A673 (cell line): ENCODE measurements at regions of chr11 and their contacts with region 1.

Region 1: DNA sequence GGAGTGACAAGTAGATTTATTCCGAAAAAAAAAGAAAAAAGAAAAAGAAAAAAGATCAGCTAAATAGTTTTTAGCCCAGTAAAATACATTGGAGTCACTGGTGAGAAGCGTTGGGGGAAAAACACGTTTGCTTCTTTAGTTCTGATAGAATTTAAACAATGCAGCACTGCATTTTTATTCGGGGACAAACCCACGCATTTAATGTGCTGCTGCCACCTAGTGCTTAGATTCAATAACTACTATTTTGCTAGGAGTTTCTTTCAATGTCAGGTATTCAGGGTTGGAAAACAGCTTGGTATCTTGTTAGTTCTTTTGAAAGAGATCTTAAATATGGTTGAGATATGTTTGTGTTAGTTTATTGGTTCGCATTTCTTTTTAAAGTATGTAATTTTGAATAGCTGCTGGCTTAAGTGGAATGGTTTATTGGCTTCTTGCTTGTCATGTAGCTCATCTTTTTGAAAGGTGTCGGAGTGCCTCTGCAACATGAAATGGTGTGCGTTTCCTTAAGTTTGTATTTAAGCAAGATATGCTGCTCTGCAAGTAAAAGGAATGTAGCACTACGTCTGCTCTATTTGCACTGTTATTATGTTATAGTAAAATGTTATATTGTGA is 41.9 kb downstream of the SVIP start:
- DNase-seq: peak; percentile 66
- H3K4me3 ChIP-seq: no peak overlapping the region
- H3K27ac ChIP-seq: no peak overlapping the region
- H3K4me1 ChIP-seq: peaks cover 16% of the 10 kb centered on the region
- H3K27me3 ChIP-seq: no peaks in the 10 kb centered on the region
- CTCF ChIP-seq: peak; percentile 69

Region 2: DNA sequence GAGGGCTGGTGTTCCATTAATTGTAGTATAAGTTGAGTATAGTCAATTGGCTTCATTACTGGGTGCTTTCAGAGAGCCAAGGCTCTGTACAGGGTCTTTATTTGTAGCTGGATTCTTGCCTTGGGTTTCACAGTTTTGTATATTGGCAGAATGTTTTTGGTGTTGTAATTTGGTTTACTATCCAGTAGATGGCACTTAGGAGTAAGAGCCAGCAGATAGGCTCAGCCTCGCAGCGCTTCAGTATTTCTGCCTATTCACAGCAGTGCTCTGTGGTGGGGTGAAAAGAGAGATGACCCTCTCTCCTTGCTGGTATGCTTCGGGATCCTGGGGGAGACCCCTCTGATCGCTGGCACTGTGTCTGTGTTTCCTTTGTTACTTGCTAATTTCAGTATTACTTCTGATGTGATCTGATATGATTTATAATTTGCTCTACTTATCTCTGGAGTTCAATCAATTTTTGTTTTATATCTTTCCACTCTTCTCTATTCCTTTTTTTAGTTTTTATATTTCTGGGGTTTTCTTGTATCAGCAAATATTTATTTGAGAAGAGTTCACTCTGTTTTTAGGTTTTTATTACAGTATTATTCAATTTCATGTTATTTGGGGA is 542.6 kb before region 1 on chr11:
- CTCF ChIA-PET with region 1: no interaction called
- POLR2A ChIA-PET with region 1: no interaction called
- intact Hi-C with region 1: loop called (anchors 5 kb)
- DNase-seq: peak; percentile 53
- H3K4me3 ChIP-seq: no peak overlapping the region
- H3K27ac ChIP-seq: no peak overlapping the region
- H3K4me1 ChIP-seq: no peaks in the 10 kb centered on the region
- H3K27me3 ChIP-seq: no peaks in the 10 kb centered on the region
- CTCF ChIP-seq: peak; percentile 68

Region 3: GRCh38 chr11:22337596-22338485 is 449.8 kb before region 1 on chr11 and contains the start of gene SLC17A6:
- CTCF ChIA-PET with region 1: interaction called, 4 read pairs
- POLR2A ChIA-PET with region 1: no interaction called
- intact Hi-C with region 1: loop called (anchors 2 kb)
- DNase-seq: peak; percentile 67
- H3K4me3 ChIP-seq: no peak within 1 kb of the TSS
- H3K27ac ChIP-seq: no peak within 1 kb of the TSS
- H3K4me1 ChIP-seq: no peaks in the 10 kb centered on the region
- H3K27me3 ChIP-seq: peaks cover 35% of the 10 kb centered on the region
- CTCF ChIP-seq: no peak
- total RNA-seq, gene SLC17A6: not detected in 2 replicates

Region 4: GRCh38 chr11:22539821-22540256 is 247.8 kb before region 1 on chr11:
- CTCF ChIA-PET with region 1: no interaction called
- POLR2A ChIA-PET with region 1: no interaction called
- intact Hi-C with region 1: loop called (anchors 5 kb)
- DNase-seq: peak; percentile 45
- H3K4me3 ChIP-seq: no peak overlapping the region
- H3K27ac ChIP-seq: no peak overlapping the region
- H3K4me1 ChIP-seq: no peaks in the 10 kb centered on the region
- H3K27me3 ChIP-seq: no peaks in the 10 kb centered on the region
- CTCF ChIP-seq: peak; percentile 66

Region 5: GRCh38 chr11:22625448-22626287 is 162.0 kb before region 1 on chr11 and contains the start of gene FANCF:
- CTCF ChIA-PET with region 1: no interaction called
- POLR2A ChIA-PET with region 1: no interaction called
- intact Hi-C with region 1: loop called (anchors 5 kb)
- DNase-seq: peak; percentile 98
- H3K4me3 ChIP-seq: peak within 1 kb of the TSS; percentile 80
- H3K27ac ChIP-seq: peak within 1 kb of the TSS; percentile 86
- H3K4me1 ChIP-seq: peaks cover 16% of the 10 kb centered on the region
- H3K27me3 ChIP-seq: no peaks in the 10 kb centered on the region
- CTCF ChIP-seq: no peak
- total RNA-seq, gene FANCF: 14.8 and 15.0 TPM in 2 replicates

Region 6: DNA sequence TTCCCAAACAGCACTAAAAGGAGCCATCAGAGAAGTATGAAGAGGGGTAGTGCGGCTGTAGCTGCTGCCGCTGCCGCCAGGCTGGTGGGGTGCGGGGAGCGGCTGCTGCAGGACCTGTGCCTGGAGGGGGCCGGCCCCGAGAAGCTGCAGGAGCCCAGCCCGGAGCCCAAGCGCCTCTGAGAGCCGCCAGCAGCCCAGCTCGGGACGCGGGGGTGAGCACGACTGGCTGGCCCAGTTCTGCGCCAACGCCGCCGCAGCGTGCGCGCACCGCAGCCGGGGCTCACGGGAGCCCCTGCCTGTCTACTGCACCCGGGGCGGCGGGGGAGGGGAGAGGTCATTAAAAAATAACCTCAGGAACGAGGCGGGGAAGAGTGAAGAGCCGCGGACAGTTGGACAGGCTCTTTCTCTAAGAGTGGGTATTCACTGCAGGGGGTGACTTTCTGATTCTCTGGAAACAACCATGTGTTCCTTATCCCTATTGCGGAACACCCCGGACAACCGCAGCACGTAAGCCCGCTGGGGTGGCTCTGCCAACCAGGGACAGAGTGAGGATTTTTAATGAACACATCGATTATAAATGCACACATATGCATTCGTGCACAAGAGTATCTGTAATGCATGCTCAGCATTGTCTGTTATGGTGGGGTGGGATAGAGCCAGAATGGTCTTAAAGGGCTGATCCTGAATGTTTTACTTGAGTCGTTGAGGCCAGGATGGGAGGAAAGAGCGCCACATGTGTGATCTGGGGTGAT is 120.8 kb before region 1 on chr11:
- CTCF ChIA-PET with region 1: interaction called, 8 read pairs
- POLR2A ChIA-PET with region 1: no interaction called
- intact Hi-C with region 1: loop called (anchors 2 kb)
- DNase-seq: peak; percentile 33
- H3K4me3 ChIP-seq: peak overlapping the region; percentile 42
- H3K27ac ChIP-seq: no peak overlapping the region
- H3K4me1 ChIP-seq: no peaks in the 10 kb centered on the region
- H3K27me3 ChIP-seq: peaks cover 50% of the 10 kb centered on the region
- CTCF ChIP-seq: no peak